Activated CD4-positive, alpha-beta T cell treated with anti-CD3 and anti-CD28 coated beads for 36 hours (primary cell): ENCODE measurements at regions of chr13 and their contacts with region 1.

Region 1: DNA sequence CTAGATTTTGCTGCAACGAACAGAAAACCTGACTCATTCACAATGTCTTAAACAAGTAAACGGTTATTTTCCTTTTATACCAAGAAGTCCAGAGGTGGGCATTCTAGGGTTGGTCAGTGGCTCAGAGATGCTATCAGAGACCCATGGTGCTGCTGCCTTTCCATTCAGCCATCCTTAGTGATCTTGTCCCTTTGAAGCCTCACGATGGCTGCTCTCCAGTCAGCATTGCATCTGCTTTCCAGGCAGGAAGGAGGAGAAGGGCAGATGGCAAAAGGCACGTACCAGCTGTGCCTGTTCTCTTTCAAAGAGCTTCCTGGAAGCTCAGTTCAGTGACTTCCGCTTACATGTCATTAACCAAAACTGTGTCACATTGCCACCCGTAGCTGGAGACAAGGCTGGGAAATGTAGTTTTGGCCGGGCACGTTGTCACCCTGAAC is 30.1 kb downstream of the WDFY2 start:
- DNase-seq: peak; percentile 77
- ATAC-seq: peak; percentile 95
- H3K4me3 Mint-ChIP-seq: peak overlapping the region; percentile 73
- H3K27ac Mint-ChIP-seq: peak overlapping the region; percentile 91
- H3K4me1 Mint-ChIP-seq: peaks cover 23% of the 10 kb centered on the region
- H3K27me3 Mint-ChIP-seq: no peaks in the 10 kb centered on the region

Region 2: DNA sequence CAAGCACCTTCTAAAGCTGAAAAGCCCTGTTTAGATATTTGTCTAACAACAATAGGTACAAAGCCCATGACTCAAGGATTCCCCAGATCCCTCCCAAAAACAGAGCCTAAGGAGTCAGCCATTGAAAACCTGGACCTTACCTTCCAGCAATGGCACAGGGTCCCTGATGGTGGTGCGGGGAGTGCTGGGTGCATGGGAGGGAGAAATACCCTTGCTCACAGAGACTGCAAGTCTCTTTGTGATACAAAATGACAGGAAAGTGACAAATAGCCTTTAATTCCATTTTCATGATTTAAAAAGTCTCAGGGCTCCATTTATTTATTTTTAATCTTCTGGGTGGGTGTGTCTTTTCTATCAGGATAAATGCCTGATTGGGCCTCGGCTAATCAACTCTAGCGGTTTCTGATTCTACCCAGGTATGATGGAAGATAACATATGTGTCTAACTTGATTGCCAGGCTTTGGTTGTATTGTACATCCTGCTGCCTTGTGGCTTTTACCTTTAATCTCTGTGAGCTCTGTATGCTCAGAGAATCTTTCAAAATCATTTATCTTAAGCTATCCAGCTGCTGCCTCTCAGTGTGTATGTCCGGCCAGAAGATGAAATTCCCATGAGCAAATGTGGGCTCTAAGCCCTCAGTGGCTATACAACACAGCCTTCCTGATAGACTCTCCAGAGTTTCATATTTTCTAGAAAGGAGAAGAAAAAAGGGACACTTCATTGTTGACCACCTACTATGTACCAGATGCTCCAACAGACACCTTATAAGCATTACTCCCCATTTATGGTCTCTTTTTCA is 446.8 kb before region 1 on chr13:
- CTCF ChIA-PET with region 1: no interaction called
- POLR2A ChIA-PET with region 1: no interaction called
- intact Hi-C with region 1: no loop called
- DNase-seq: no peak
- ATAC-seq: no peak
- H3K4me3 Mint-ChIP-seq: no peak overlapping the region
- H3K27ac Mint-ChIP-seq: no peak overlapping the region
- H3K4me1 Mint-ChIP-seq: no peaks in the 10 kb centered on the region
- H3K27me3 Mint-ChIP-seq: peaks cover 23% of the 10 kb centered on the region

Region 3: GRCh38 chr13:51380269-51380668 is 234.1 kb before region 1 on chr13:
- CTCF ChIA-PET with region 1: no interaction called
- POLR2A ChIA-PET with region 1: no interaction called
- intact Hi-C with region 1: no loop called
- DNase-seq: no peak
- ATAC-seq: no peak
- H3K4me3 Mint-ChIP-seq: no peak overlapping the region
- H3K27ac Mint-ChIP-seq: no peak overlapping the region
- H3K4me1 Mint-ChIP-seq: no peaks in the 10 kb centered on the region
- H3K27me3 Mint-ChIP-seq: no peaks in the 10 kb centered on the region

Region 4: DNA sequence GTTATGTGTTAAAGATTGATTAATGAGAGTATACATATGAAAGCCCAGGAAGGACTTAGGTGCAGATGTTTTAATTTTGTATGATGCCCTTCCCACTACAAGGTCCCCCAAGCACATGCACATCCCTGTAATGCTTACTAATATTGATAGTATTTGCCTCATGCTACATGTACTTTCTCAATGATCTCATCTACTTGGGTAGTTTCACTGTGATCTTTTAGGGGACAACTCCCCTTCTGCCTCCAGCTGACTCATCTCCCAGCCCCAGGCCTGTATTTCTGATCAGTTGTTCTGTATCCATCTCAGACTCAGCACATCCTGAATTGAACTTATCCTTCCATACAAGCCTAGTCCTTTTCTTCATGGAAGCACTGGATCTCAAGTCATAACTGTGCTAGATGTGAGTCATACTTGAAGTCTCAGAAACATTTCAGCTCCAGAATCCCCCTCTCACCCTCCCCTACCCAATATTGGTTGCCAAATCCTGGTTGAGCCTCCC is 112.2 kb before region 1 on chr13:
- CTCF ChIA-PET with region 1: no interaction called
- POLR2A ChIA-PET with region 1: no interaction called
- intact Hi-C with region 1: loop called in 1 of 2 experiments (anchors 1 kb)
- DNase-seq: peak; percentile 68
- ATAC-seq: peak; percentile 92
- H3K4me3 Mint-ChIP-seq: no peak overlapping the region
- H3K27ac Mint-ChIP-seq: peak overlapping the region; percentile 73
- H3K4me1 Mint-ChIP-seq: peaks cover 29% of the 10 kb centered on the region
- H3K27me3 Mint-ChIP-seq: peaks cover 2% of the 10 kb centered on the region